SK-N-SH (cell line): ENCODE measurements at regions of chr9 and their contacts with region 1.

Region 1: DNA sequence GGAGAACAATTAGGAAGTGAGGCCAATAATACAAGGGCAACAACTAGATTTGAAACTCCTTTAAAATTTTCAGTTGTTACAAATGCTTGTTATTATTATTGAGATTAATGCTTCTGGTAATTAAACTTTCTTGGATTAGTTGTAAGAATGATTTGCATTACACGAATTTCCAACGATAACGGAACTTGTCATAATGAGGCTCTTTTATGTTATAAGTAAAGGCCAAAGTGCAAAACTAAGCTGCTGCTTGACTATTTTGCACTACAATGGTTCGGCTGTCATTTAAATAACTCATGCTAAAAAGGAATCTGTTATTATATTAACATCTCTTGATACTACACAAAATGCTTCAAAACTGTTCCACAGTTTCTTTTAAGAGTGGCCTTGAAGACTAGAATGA is 1007.1 kb downstream of the PTPRD start:
- DNase-seq: no peak
- H3K4me3 ChIP-seq: no peak overlapping the region
- H3K27ac ChIP-seq: no peak overlapping the region
- H3K4me1 ChIP-seq: no peaks in the 10 kb centered on the region; a peak in 1 of 4 replicates
- H3K27me3 ChIP-seq: no peaks in the 10 kb centered on the region
- CTCF ChIP-seq: no peak
- EP300 ChIP-seq: no peak
- RAD21 ChIP-seq: no peak

Region 2: DNA sequence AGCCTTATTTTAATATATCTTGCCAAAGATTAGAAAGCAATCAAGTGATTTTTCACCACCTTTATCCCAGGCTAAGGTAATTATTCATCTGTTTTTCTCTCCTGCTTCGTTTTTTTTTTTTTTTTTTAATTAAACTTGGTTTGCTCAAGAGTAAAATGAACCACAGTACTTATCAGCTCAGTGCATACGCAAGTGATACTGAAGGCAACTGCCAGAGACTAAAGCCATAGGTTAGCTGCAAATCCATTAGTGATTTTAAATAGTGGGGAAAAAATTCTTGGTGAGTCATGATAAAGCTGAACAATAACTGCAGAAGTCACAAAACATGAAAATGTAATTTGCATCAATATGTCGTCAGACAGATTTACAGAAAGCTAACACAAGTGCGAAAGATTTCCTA is 178.0 kb after region 1 on chr9:
- CTCF ChIA-PET with region 1: interaction called, 32 read pairs
- POLR2A ChIA-PET with region 1: no interaction called
- DNase-seq: no peak
- H3K4me3 ChIP-seq: no peak overlapping the region
- H3K27ac ChIP-seq: no peak overlapping the region
- H3K4me1 ChIP-seq: no peaks in the 10 kb centered on the region
- H3K27me3 ChIP-seq: no peaks in the 10 kb centered on the region
- CTCF ChIP-seq: no peak
- EP300 ChIP-seq: no peak
- RAD21 ChIP-seq: no peak

Region 3: DNA sequence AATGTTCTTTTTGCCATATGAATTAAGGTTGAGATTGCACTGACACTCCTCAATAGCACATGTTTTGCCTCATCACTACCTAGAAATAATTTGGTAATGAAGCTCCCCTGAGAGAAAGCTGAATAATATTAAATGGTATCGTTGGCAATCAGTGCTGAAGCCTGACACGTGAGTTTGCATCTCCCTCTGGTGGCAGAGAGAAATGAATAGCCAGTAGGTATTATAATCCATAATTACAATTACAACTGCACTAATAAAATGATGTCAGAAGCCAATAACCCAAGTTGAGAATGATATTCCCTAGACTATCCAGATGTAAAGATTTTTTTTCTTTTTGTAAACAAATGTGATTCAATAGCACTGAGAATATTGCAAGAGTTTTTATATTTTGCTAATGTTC is 306.8 kb after region 1 on chr9:
- CTCF ChIA-PET with region 1: interaction called, 22 read pairs
- POLR2A ChIA-PET with region 1: interaction called, 6 read pairs
- DNase-seq: peak; percentile 5
- H3K4me3 ChIP-seq: no peak overlapping the region
- H3K27ac ChIP-seq: no peak overlapping the region
- H3K4me1 ChIP-seq: no peaks in the 10 kb centered on the region
- H3K27me3 ChIP-seq: no peaks in the 10 kb centered on the region
- CTCF ChIP-seq: peak; percentile 45
- EP300 ChIP-seq: no peak
- RAD21 ChIP-seq: peak; percentile 67